ENCODE measurements at regions of chr1 and their contacts with region 1.

Region 1: GRCh38 chr1:166910396-166910994 is 34.4 kb upstream of the TADA1 start:
- DNase-seq: peak; percentile 83
- H3K4me3 Mint-ChIP-seq: no peak overlapping the region
- H3K27ac Mint-ChIP-seq: no peak overlapping the region
- H3K4me1 Mint-ChIP-seq: peaks cover 18% of the 10 kb centered on the region
- H3K27me3 Mint-ChIP-seq: no peaks in the 10 kb centered on the region
- CTCF ChIP-seq: peak; percentile 57

Region 2: DNA sequence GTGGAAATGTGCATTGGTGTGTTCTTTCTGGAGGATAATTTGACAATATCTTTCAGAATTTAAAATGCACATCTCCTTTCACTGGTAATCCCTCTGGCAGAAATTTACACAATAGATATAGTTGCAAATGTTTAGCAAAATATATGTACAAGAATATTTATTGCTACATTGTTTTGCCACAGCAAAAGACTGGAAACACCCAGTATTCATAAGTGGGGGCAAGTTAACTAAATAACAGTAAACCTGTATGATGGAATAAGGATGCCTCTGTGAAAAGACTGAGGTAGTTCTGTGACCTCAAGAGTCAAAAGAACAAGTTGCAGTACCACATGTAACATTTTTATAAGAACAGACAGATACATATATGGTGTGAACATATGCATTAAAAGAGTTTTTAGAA is 20.7 kb before region 1 on chr1:
- CTCF ChIA-PET with region 1: no interaction called
- intact Hi-C with region 1: no loop called
- DNase-seq: no peak
- H3K4me3 Mint-ChIP-seq: no peak overlapping the region
- H3K27ac Mint-ChIP-seq: no peak overlapping the region
- H3K4me1 Mint-ChIP-seq: no peaks in the 10 kb centered on the region
- H3K27me3 Mint-ChIP-seq: peaks cover 45% of the 10 kb centered on the region
- CTCF ChIP-seq: no peak

Region 3: GRCh38 chr1:166975361-166976129 is 65.0 kb after region 1 on chr1 and contains the start of gene ILDR2:
- CTCF ChIA-PET with region 1: interaction called, 3 read pairs
- intact Hi-C with region 1: loop called (anchors 5 kb)
- DNase-seq: peak; percentile 55
- H3K4me3 Mint-ChIP-seq: peak within 1 kb of the TSS; percentile 58
- H3K27ac Mint-ChIP-seq: no peak within 1 kb of the TSS
- H3K4me1 Mint-ChIP-seq: peaks cover 8% of the 10 kb centered on the region
- H3K27me3 Mint-ChIP-seq: peaks cover 77% of the 10 kb centered on the region
- CTCF ChIP-seq: peak; percentile 21
- total RNA-seq, gene ILDR2: 0.91 and 1.9 TPM in 2 replicates

Region 4: DNA sequence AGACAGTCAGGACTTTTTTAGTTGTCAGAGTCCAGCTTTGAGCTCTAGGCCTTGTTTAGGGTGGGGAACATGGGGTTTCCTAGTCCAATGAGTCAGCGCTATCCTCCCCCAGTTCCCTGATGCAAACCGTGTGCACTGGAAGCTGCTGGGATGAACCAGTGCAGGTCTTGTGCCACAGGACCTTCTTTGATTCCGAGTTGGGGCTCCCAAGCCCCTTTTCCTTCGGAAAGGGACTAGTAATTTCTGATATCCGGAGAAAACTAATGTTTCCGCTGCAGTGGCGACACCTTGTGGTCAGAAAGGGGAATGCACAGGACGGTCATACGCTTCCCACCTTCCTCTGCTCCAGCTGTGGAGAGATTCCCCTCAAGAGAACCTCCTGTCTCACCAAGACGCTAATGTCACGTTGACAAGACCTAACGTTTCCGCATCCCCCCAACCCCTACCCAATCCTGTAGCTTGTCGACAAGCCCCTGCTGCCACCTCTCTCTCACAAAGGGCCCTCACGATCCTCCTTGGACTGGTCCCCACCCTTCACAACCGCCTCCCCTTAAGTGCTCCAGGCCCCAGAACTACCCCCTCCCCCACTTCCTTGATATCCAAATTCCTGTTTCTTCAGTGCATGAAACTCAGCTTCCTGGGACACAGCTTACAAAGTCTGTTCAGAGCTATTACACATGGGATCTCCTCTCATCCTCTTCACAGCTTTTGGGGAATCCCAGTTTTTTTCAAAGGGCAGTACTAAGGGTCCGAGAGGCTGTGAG is 148.7 kb after region 1 on chr1:
- CTCF ChIA-PET with region 1: interaction called, 221 read pairs
- intact Hi-C with region 1: loop called (anchors 1 kb)
- DNase-seq: peak; percentile 83
- H3K4me3 Mint-ChIP-seq: no peak overlapping the region
- H3K27ac Mint-ChIP-seq: no peak overlapping the region
- H3K4me1 Mint-ChIP-seq: peaks cover 17% of the 10 kb centered on the region
- H3K27me3 Mint-ChIP-seq: no peaks in the 10 kb centered on the region
- CTCF ChIP-seq: peak; percentile 93

Region 5: DNA sequence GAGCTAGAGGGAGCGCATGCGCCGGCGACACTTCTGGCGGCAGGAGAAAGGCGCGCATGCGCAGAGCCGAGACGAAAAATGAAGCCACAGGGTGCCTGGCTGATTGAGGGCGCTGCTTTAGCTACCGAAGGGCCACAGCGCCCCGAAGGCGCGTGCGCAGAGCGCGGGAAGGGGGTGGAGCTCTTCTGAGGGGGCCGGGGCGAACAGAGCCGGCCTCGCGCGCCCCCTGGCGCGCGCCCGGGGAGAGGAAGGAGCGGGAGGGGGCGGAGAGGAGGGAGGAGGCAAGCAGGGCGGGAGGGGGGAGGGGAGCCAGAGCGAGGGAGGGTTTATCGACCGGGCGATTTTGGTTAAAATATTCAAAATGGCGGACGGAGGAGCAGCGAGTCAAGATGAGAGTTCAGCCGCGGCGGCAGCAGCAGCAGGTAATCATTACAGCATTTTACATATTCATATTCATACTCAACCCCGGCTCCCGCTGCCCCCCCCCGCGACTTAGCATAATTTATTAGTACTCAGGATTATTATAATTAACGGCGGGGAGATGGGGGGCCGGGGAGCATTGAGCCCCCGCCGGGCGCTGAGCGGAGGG is 310.1 kb after region 1 on chr1 and contains the start of gene POU2F1:
- CTCF ChIA-PET with region 1: interaction called, 10 read pairs
- intact Hi-C with region 1: loop called (anchors 10 kb)
- DNase-seq: peak; percentile 98
- H3K4me3 Mint-ChIP-seq: peak within 1 kb of the TSS; percentile 79
- H3K27ac Mint-ChIP-seq: peak within 1 kb of the TSS; percentile 87
- H3K4me1 Mint-ChIP-seq: peaks cover 25% of the 10 kb centered on the region
- H3K27me3 Mint-ChIP-seq: no peaks in the 10 kb centered on the region
- CTCF ChIP-seq: peak; percentile 63
- total RNA-seq, gene POU2F1: 25.3 and 25.4 TPM in 2 replicates

Region 6: DNA sequence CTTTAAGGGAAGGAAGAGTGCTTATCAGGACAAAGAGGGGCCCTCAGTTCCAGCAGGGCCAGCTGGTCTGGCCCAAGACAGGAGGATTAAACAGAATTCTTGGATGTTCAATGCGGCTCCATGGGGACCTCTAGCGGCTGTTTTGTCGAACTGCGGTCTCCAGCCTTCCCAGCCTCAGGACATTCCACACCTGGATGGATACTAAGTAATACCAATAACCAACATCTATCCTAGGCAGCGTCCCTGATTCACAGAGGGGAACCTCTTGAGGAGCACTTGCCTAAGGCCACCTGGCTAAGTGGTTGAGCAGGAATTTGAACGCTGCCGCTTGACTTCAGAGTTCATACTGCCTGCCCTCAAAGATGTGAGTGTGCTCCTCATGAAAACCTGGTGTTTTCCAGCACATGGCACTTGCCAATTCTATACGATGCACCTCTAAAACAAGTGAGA is 623.4 kb after region 1 on chr1:
- CTCF ChIA-PET with region 1: interaction called, 4 read pairs
- intact Hi-C with region 1: loop called (anchors 2 kb)
- DNase-seq: peak; percentile 80
- H3K4me3 Mint-ChIP-seq: no peak overlapping the region
- H3K27ac Mint-ChIP-seq: no peak overlapping the region
- H3K4me1 Mint-ChIP-seq: peaks cover 7% of the 10 kb centered on the region
- H3K27me3 Mint-ChIP-seq: no peaks in the 10 kb centered on the region
- CTCF ChIP-seq: peak; percentile 90

Measured in Calu3 (cell line).